Stomach (tissue), 19 donors: ENCODE measurements at regions of chr7 and their contacts with region 1.

Region 1: GRCh38 chr7:143205560-143206293 is 16.1 kb upstream of the TAS2R40 start:
- DNase-seq: peak in 1 of 2 donors; percentile 54
- H3K4me3 ChIP-seq: no peak overlapping the region
- H3K27ac ChIP-seq: no peak overlapping the region
- H3K4me1 ChIP-seq: no peaks in the 10 kb centered on the region
- H3K27me3 ChIP-seq: peaks cover 0 to 2% (median 0%) of the 10 kb centered on the region in 3 donors
- CTCF ChIP-seq: no peak
- EP300 ChIP-seq: no peak
- POLR2A ChIP-seq: no peak

Region 2: DNA sequence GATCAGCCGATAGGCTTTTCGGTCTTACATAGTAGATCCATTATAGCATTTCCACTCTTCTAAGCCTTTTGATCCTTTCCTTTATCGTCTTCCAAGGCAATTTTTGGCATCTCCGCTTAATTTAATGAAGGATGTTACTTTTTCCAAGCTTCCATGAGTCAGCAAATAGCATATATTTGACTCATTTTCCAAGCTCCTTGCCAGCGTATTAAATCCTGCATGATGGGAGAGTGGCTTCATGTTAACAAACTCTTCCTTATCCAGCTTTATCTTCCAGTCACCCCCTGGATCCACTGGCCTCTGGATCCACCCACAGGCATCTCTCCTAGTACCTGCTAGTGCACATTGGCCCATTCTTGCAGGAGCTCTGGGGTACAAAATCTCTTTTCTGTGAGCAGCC is 191.8 kb before region 1 on chr7:
- intact Hi-C with region 1: loop called (anchors 5 kb)
- DNase-seq: peak in 1 of 2 donors; percentile 72
- H3K4me3 ChIP-seq: no peak overlapping the region
- H3K27ac ChIP-seq: peak overlapping the region in 2 of 5 donors; percentile 1 to 32
- H3K4me1 ChIP-seq: peaks cover 0 to 12% (median 0%) of the 10 kb centered on the region in 4 donors
- H3K27me3 ChIP-seq: no peaks in the 10 kb centered on the region
- CTCF ChIP-seq: no peak
- EP300 ChIP-seq: no peak
- POLR2A ChIP-seq: no peak

Region 3: DNA sequence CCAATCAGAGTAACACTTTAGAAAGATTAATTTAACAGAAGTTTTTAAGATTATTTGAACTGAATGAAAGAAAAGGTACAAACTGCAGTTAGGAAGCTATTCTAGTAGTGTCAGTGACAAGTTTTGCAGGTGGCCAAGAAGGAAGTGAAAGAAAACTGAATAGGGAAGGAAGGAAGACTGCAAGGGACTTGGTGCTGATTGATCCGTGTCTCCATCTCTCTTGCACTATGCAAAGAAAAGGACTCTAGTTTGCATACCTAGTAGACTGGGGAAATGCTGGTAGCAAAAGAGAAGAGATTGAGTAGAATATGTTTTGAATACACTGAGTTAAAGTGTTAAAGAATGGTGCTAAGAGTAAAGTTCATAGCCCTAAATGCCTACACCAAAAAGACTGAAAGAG is 120.6 kb before region 1 on chr7:
- intact Hi-C with region 1: no loop called
- DNase-seq: no peak
- H3K4me3 ChIP-seq: no peak overlapping the region
- H3K27ac ChIP-seq: no peak overlapping the region
- H3K4me1 ChIP-seq: no peaks in the 10 kb centered on the region
- H3K27me3 ChIP-seq: no peaks in the 10 kb centered on the region
- CTCF ChIP-seq: no peak
- EP300 ChIP-seq: no peak
- POLR2A ChIP-seq: no peak